Activated naive CD8-positive, alpha-beta T cell treated with anti-CD3 and anti-CD28 coated beads, Interleukin-2, amount 10 ng/mL, durations not matched to agents 7 days and 5 days (primary cell): ENCODE measurements at regions of chr19 and their contacts with region 1.

Region 1: GRCh38 chr19:41859618-41860418 is at the start of gene RPS19:
- DNase-seq: peak; percentile 97
- ATAC-seq: peak; percentile 83
- H3K4me3 Mint-ChIP-seq: peak within 1 kb of the TSS; percentile 85
- H3K27ac Mint-ChIP-seq: peak within 1 kb of the TSS; percentile 89
- H3K4me1 Mint-ChIP-seq: peaks cover 41% of the 10 kb centered on the region
- H3K27me3 Mint-ChIP-seq: no peaks in the 10 kb centered on the region
- total RNA-seq, gene RPS19: 3,237 to 3,326 TPM

Region 2: DNA sequence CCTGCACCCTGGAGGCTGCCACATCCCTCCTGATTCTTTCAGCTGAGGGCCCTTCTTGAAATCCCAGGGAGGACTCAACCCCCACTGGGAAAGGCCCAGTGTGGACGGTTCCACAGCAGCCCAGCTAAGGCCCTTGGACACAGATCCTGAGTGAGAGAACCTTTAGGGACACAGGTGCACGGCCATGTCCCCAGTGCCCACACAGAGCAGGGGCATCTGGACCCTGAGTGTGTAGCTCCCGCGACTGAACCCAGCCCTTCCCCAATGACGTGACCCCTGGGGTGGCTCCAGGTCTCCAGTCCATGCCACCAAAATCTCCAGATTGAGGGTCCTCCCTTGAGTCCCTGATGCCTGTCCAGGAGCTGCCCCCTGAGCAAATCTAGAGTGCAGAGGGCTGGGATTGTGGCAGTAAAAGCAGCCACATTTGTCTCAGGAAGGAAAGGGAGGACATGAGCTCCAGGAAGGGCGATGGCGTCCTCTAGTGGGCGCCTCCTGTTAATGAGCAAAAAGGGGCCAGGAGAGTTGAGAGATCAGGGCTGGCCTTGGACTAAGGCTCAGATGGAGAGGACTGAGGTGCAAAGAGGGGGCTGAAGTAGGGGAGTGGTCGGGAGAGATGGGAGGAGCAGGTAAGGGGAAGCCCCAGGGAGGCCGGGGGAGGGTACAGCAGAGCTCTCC is 158.3 kb before region 1 on chr19:
- POLR2A ChIA-PET with region 1: no interaction called
- DNase-seq: peak; percentile 25
- ATAC-seq: no peak
- H3K4me3 Mint-ChIP-seq: no peak overlapping the region
- H3K27ac Mint-ChIP-seq: no peak overlapping the region
- H3K4me1 Mint-ChIP-seq: no peaks in the 10 kb centered on the region
- H3K27me3 Mint-ChIP-seq: peaks cover 13% of the 10 kb centered on the region

Region 3: GRCh38 chr19:41844601-41845000 is 15.2 kb before region 1 on chr19 and contains the start of gene LYPD4:
- POLR2A ChIA-PET with region 1: no interaction called
- DNase-seq: no peak
- ATAC-seq: no peak
- H3K4me3 Mint-ChIP-seq: no peak within 1 kb of the TSS
- H3K27ac Mint-ChIP-seq: no peak within 1 kb of the TSS
- H3K4me1 Mint-ChIP-seq: no peaks in the 10 kb centered on the region
- H3K27me3 Mint-ChIP-seq: peaks cover 7% of the 10 kb centered on the region
- total RNA-seq, gene LYPD4: not detected

Region 4: DNA sequence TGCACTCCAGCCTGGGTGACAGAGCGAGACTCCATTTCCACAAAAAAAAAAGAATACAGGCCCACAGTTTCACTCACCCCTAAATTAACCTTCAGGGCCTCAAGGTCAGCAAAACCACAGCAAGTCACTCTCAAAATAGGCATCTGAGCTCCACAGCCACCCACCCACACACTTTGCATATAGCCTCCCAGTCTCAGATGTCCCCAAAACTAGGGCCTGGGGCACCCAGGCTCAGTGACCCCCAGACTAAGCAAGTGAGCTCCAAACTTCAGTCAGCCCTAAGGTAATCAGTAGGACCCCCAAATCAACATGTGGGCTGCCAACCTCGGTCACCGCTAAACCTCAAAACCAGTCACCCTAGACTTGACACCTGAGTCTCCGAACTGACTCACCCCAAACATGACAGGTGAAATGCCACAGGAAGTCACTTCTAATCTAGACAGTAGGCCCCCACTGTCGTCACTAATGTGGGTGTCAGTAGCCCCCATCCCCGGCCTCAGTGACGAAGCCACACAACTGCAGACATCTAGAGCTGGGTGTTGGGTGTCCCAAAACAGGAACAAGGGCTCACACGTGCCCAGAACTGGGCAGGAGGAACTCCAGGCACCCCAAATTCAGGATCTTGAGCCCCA is 85.4 kb after region 1 on chr19:
- POLR2A ChIA-PET with region 1: interaction called, 28 read pairs
- DNase-seq: peak; percentile 82
- ATAC-seq: peak; percentile 90
- H3K4me3 Mint-ChIP-seq: peak overlapping the region; percentile 69
- H3K27ac Mint-ChIP-seq: peak overlapping the region; percentile 60
- H3K4me1 Mint-ChIP-seq: peaks cover 33% of the 10 kb centered on the region
- H3K27me3 Mint-ChIP-seq: peaks cover 8% of the 10 kb centered on the region

Region 5: DNA sequence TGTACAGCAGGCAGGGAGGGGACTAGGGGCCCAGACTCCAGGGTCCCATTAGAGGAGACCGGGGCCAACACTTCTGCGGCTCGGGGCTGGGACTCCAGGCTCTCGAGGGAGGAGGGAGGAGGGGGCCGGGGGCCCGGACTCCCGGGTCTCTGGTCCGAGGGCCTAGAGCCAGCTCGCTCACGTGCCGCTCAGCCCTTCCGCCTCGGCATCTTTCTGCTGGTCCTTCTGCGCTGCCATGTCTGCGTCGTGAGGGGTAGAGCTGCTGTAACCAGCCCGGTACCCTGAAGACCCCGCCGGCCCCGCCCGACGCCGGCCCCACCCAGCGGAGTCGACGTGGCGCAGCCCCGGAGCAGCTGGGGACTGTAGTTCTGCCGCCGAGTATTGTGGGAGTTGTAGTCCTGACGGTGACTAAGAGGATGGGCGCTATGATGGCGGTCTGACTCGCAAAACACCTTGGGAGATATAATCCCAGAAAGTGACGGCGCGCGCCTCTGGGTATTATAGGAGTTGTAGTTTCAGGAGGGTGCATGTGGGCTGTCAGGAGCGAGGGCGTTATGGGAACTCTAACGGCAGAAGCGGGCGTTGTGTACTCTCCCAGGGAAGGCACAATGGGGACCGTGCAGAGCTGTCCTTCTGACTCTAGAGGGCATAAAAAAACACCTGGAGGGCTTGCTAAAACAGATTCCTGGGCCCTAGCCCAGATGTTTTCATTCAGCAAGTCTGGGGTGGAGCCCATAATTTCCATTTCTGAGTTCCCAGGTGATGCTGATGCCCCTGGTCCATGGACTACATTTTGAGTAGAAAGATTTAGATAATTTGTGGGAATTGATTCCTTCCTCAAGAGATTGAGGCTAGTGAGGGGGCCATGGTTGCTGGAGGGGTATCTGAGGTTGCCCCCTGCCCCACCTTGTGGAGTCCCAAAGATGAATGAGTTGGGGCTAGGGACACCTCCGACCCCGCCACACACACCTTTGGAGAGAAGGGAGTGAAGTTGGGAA is 99.5 kb after region 1 on chr19 and contains the start of gene RABAC1:
- POLR2A ChIA-PET with region 1: interaction called, 25 read pairs
- DNase-seq: peak; percentile 85
- ATAC-seq: peak; percentile 90
- H3K4me3 Mint-ChIP-seq: peak within 1 kb of the TSS; percentile 99
- H3K27ac Mint-ChIP-seq: peak within 1 kb of the TSS; percentile 96
- H3K4me1 Mint-ChIP-seq: peaks cover 15% of the 10 kb centered on the region
- H3K27me3 Mint-ChIP-seq: no peaks in the 10 kb centered on the region
- total RNA-seq, gene RABAC1: 85.3 to 87.3 TPM